PC-9 (cell line): ENCODE measurements at regions of chr11 and their contacts with region 1.

Region 1: GRCh38 chr11:64204464-64204989 is 2.0 kb upstream of the FERMT3 start:
- DNase-seq: peak; percentile 85 to 93
- H3K4me3 ChIP-seq: no peak overlapping the region
- H3K27ac ChIP-seq: no peak overlapping the region
- H3K4me1 ChIP-seq: 0 out of 2 replicates have a peak, but pooled peaks cover 4% of the 10 kb centered on the region
- H3K27me3 ChIP-seq: no peaks in the 10 kb centered on the region
- CTCF ChIP-seq: peak; percentile 88

Region 2: DNA sequence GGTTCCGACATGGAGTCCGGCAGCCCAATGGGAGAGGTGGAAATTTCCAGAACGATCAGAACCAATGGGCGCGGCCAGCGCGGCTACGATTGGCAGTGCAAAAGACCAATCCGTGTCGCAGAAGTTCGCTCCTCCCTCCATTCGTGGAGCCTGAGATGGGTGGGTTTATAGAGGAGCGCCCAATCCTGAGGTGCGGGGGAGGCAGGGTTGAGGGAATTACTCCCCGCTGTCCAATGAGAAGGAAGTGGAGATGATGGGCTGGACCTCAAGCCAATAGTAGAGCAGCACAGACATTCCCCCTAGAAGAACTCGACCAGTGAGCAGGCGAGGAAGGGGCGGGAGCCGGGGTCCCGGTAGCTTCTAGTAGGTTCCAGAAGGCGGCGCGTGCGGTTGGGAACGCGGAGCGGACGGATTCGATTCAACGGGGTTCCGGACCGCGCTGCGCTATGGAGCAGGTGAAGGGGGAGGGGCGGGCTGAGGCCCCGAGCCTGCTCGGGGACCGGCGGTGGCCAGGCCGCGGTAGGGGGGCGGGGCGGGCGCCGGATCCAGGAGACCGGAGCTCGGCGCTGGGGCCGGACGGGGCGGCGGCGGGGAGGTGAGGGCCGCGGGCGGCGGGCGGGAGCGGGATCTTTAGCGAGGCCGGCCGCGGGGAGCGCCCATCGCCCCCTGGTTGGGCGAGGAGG is 18.6 kb before region 1 on chr11 and contains the start of gene STIP1:
- CTCF ChIA-PET with region 1: no interaction called
- POLR2A ChIA-PET with region 1: interaction called, 16 read pairs
- intact Hi-C with region 1: no loop called
- DNase-seq: peak; percentile 100
- H3K4me3 ChIP-seq: peak within 1 kb of the TSS; percentile 64
- H3K27ac ChIP-seq: peak within 1 kb of the TSS; percentile 64
- H3K4me1 ChIP-seq: peaks cover 28% of the 10 kb centered on the region
- H3K27me3 ChIP-seq: no peaks in the 10 kb centered on the region
- CTCF ChIP-seq: peak; percentile 31; the same call in 1 of the 2 replicates
- total RNA-seq, gene STIP1: 267 and 299 TPM in 2 replicates

Region 3: DNA sequence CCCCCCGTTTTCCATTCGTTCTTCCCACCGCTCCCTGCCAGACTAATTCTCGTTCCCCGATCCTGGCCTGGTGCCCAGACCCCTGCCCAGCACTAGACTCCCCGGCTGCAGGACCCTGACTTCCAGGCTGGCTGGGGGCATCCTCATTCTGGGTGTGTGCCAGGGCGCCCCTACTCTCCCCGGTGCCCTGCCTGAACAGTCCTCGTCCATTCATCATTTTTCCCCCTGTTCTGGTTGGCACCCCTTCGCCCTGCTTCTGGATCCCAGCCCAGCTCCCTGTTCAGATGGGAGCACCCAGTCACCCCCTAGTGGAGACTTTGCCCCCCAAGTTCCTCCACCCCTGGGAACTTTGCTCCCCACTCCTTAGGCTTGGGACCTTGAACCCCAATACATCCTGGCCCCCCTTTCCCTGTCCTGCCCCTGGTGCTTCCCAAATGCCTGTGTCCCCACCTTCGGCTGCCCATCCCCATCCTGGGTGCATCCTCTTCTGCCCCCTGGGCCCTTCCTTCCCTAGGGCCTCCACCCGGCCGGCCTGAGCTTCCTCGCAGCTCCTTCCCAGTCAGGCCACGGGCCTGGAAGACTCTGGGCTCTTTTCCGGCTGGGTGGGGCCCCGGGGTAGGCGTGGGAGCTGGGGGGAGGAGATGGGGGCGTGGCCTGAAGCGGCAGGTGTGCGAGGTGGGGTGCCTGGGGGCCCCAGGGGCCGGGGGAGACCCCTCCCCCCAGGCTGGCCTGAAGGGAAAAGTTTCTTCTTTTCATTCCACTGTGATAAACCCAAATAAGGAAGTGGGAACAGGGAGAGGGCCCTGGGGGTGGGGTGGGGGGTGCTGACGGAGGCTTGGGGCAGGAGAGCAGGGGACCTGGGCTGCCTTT is 47.7 kb after region 1 on chr11:
- CTCF ChIA-PET with region 1: interaction called, 6 read pairs
- POLR2A ChIA-PET with region 1: no interaction called
- intact Hi-C with region 1: loop called (anchors 1 kb)
- DNase-seq: peak in 1 of 2 experiments; percentile 76
- H3K4me3 ChIP-seq: peak overlapping the region; percentile 88
- H3K27ac ChIP-seq: no peak overlapping the region
- H3K4me1 ChIP-seq: peaks cover 5% of the 10 kb centered on the region; the same call in 1 of the 2 replicates
- H3K27me3 ChIP-seq: no peaks in the 10 kb centered on the region
- CTCF ChIP-seq: peak; percentile 61

Region 4: GRCh38 chr11:64331557-64332371 is 127.2 kb after region 1 on chr11:
- CTCF ChIA-PET with region 1: interaction called, 11 read pairs
- POLR2A ChIA-PET with region 1: interaction called, 7 read pairs
- intact Hi-C with region 1: no loop called
- DNase-seq: peak; percentile 97 to 99
- H3K4me3 ChIP-seq: no peak overlapping the region; the same call in 1 of the 2 replicates
- H3K27ac ChIP-seq: peak overlapping the region; percentile 83
- H3K4me1 ChIP-seq: peaks cover 51% of the 10 kb centered on the region
- H3K27me3 ChIP-seq: no peaks in the 10 kb centered on the region
- CTCF ChIP-seq: peak; percentile 88

Region 5: DNA sequence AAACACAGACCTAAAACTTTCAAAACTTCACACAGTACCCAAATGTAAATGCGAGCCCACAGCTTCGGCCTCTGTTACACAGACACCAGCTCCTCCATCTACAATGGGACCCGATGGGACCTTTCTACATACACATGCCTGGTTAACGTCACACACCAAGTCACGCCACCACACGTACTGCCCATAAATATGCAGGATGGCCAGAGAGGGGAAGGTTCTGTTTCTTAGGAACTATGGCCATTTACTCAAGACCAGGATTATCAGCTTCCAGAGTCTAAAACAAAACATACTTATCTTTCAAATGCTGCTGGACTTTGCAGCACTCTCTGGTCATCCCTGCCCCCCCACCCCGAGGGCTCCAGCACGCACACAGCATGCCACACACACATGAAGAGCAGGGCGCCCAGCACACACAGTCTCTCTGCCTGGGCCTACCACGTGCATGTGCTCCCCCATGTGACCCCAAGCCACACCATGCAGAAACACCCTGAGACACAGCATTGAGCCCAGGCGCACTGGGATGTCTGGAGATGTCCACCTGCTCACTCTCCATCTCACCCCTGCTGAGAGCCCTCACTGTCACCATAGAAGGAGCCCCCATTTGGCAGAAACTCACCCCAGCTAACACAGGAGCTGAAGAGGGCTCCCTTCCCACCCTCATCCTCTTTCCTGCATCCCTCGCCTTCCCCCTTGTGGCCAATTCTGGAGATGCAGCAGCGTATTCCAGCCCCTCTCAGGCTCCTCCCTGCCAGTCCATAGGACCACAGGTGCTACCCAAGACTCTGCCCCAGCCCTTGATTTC is 448.3 kb after region 1 on chr11:
- CTCF ChIA-PET with region 1: no interaction called
- POLR2A ChIA-PET with region 1: no interaction called
- intact Hi-C with region 1: loop called (anchors 1 kb)
- DNase-seq: peak; percentile 46 to 88
- H3K4me3 ChIP-seq: no peak overlapping the region
- H3K27ac ChIP-seq: no peak overlapping the region
- H3K4me1 ChIP-seq: peaks cover 17% of the 10 kb centered on the region
- H3K27me3 ChIP-seq: no peaks in the 10 kb centered on the region
- CTCF ChIP-seq: peak; percentile 97

Region 6: GRCh38 chr11:64826062-64826461 is 621.5 kb after region 1 on chr11:
- CTCF ChIA-PET with region 1: no interaction called
- POLR2A ChIA-PET with region 1: no interaction called
- intact Hi-C with region 1: no loop called
- DNase-seq: no peak
- H3K4me3 ChIP-seq: no peak overlapping the region
- H3K27ac ChIP-seq: no peak overlapping the region
- H3K4me1 ChIP-seq: no peaks in the 10 kb centered on the region
- H3K27me3 ChIP-seq: no peaks in the 10 kb centered on the region
- CTCF ChIP-seq: no peak